ENCODE measurements at regions of chr7 and their contacts with region 1.

Region 1: DNA sequence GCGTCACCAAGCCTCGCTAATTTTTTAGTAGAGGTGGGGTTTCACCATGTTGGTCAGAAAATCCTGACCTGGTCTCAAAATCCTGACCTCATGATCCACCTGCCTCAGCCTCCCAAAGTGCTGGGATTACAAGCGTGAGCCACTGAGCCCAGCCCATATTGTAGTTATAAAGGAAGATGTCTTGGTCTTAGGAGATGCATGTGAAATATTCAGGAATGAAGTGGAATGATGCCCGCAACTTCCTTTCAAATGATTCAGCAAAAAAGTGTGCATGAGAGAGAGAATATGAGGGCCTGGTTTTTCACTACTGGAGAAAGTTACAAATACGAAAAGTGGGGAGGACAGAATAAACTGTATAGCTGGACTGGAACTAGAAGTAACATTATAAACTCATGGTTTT is 15.9 kb downstream of the TMEM209 start:
- DNase-seq: no peak
- ATAC-seq: no peak
- H3K4me3 Mint-ChIP-seq: no peak overlapping the region
- H3K27ac Mint-ChIP-seq: no peak overlapping the region
- H3K4me1 Mint-ChIP-seq: peaks cover 3% of the 10 kb centered on the region
- H3K27me3 Mint-ChIP-seq: no peaks in the 10 kb centered on the region

Region 2: GRCh38 chr7:130205084-130205947 is 16.0 kb after region 1 on chr7 and contains the start of gene TMEM209:
- CTCF ChIA-PET with region 1: interaction called, 6 read pairs
- POLR2A ChIA-PET with region 1: interaction called, 22 read pairs
- DNase-seq: peak; percentile 96
- ATAC-seq: peak; percentile 94
- H3K4me3 Mint-ChIP-seq: peak within 1 kb of the TSS; percentile 100
- H3K27ac Mint-ChIP-seq: peak within 1 kb of the TSS; percentile 100
- H3K4me1 Mint-ChIP-seq: peaks cover 31% of the 10 kb centered on the region
- H3K27me3 Mint-ChIP-seq: peaks cover 2% of the 10 kb centered on the region
- total RNA-seq, gene TMEM209: 40.2 to 43.4 TPM